Activated T-helper 2 cell treated with anti-CD3 and anti-CD28 coated beads, Interferon-gamma antibody, Interleukin-2, Interleukin-4, amounts not matched to agents 10 μg/mL and 5 μg/mL and 100 μg/mL, durations not matched to agents 14 hours and 24 hours and 36 hours (primary cell): ENCODE measurements at regions of chr22 and their contacts with region 1.

Region 1: GRCh38 chr22:29603358-29604075 is at the start of gene NF2:
- DNase-seq: peak; percentile 99
- H3K4me3 Mint-ChIP-seq: peak within 1 kb of the TSS; percentile 97
- H3K27ac Mint-ChIP-seq: peak within 1 kb of the TSS; percentile 97
- H3K4me1 Mint-ChIP-seq: peaks cover 22% of the 10 kb centered on the region
- H3K27me3 Mint-ChIP-seq: no peaks in the 10 kb centered on the region
- total RNA-seq, gene NF2: 57.1 and 57.7 TPM in 2 replicates

Region 2: DNA sequence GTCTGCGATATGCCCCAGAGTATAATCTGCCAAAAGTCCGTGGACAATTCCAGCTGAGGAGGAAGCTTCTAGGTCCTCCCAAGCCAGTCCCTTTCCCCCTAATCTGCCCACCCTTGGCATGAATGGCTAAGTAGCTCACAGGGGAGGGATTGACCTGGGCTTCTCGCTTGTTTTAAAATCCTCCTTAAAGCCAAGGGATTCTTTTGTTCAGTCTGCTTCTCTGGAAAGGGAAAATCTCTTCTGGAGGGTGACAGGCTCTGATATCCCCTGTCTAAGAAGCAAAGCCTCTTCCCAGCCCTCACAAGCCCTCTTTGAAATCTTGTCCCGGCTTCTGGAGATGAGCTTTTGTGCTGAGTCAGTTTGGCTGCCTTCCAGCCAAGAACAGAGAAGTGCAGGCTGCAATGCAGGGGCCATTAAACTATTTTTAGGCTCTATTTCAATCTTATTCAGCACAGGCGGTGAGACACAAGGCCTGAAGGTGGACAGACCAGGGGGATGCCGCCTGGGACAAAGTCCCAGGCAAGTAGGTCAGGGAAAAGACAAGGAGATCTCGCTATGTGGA is 99.6 kb before region 1 on chr22:
- intact Hi-C with region 1: no loop called
- DNase-seq: no peak
- H3K4me3 Mint-ChIP-seq: no peak overlapping the region
- H3K27ac Mint-ChIP-seq: no peak overlapping the region
- H3K4me1 Mint-ChIP-seq: no peaks in the 10 kb centered on the region
- H3K27me3 Mint-ChIP-seq: no peaks in the 10 kb centered on the region

Region 3: DNA sequence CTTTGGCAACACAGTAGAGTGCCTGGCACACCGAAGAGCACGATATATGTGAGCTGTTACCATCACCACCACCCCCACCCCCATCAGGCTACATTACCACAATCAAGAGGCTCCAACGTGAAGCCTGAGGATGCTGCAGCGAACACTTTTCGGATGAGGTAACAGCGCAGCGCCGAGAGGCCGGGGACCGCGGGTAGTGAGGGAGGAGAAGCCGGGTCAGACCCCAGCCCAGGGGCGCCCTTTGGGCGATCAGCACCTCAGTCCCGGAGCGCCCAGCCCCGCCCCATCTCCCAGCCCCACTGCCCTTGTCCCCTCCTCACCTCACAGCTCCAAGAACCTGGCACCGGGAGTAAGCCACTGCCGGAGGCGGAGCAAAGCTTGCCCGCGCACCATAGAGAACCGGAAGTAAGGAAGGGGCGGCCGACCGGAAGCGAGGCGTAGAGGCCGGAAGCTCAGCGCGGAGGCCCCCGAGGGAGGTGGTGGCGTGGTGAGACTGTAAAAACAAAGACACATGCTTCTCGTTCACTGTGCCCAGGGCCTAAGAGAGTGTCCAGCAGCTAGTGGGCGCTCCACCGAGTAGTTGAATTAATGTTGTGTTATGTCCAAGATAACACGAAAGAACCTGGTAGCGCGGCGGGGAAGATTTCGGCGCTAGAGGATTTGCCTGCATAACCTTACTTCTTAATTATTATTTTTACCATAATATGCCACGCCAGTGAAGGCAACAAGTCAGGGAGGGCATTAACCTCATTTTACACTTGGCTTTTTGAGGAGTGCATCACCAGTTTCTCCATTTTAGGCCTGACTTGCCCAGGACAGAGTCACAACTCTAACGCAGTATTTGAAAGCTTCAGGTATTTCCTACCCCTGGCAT is 49.9 kb before region 1 on chr22 and contains the start of gene THOC5:
- intact Hi-C with region 1: loop called (anchors 2 kb)
- DNase-seq: peak; percentile 88
- H3K4me3 Mint-ChIP-seq: peak within 1 kb of the TSS; percentile 92
- H3K27ac Mint-ChIP-seq: peak within 1 kb of the TSS; percentile 90
- H3K4me1 Mint-ChIP-seq: peaks cover 11% of the 10 kb centered on the region
- H3K27me3 Mint-ChIP-seq: no peaks in the 10 kb centered on the region
- total RNA-seq, gene THOC5: 50.5 and 52.7 TPM in 2 replicates

Region 4: DNA sequence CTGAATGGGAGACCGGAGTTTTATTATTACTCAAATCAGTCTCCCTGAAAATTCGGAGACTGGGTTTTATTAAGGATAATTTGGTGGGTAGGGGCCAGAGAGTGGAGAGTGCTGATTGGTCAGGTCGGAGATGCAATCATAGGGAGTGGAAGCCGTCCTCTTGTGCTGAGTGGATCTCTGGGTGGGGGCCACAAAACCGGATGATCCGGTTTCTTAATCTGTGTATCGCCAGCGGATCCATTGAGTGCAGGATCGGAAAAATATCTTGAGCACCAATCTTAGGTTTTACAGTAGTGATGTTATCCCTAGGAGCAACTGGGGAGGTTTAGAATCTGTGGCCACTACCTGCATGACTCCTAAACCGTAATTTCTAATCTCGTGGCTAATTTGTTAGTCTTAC is 21.7 kb before region 1 on chr22:
- intact Hi-C with region 1: loop called (anchors 1 kb)
- DNase-seq: no peak
- H3K4me3 Mint-ChIP-seq: peak overlapping the region; percentile 92
- H3K27ac Mint-ChIP-seq: peak overlapping the region; percentile 74
- H3K4me1 Mint-ChIP-seq: peaks cover 12% of the 10 kb centered on the region
- H3K27me3 Mint-ChIP-seq: no peaks in the 10 kb centered on the region

Region 5: DNA sequence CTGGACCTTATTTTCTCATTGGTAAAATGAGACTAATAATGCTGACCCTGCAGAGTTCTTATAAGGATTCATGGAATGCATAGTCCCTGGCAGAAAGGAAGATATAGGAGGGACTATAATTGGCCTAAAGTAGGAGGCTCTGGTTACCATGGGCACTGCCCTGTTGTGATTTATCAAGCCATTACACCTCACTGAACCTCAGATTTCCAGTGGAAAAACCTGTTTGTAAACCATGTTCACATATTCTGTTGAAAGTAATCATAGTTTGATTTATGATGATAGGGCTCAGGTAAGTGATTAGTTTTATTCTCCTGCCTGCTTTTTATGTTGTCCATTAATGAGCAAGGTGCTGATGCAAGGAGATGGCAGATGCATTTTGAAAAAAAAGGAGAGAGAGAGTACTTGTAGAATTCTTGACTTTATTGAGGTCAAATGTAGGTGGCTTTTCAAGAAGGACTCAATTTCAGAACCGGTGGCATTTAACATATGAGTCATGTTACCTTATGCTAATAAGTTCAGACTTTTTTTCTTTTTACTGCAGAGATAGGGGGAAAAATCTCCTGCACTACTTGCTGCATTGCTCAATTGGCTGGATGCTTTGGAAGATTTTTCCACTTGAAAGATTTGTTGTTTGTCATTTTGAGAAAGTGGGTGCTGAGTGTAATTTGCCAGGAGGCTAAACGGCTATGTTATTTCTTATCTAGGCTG is 14.6 kb after region 1 on chr22:
- intact Hi-C with region 1: loop called (anchors 1 kb)
- DNase-seq: no peak
- H3K4me3 Mint-ChIP-seq: no peak overlapping the region
- H3K27ac Mint-ChIP-seq: peak overlapping the region; percentile 61
- H3K4me1 Mint-ChIP-seq: peaks cover 29% of the 10 kb centered on the region
- H3K27me3 Mint-ChIP-seq: no peaks in the 10 kb centered on the region

Region 6: GRCh38 chr22:29766632-29767170 is 163.2 kb after region 1 on chr22 and contains the start of gene ZMAT5:
- intact Hi-C with region 1: loop called (anchors 1 kb)
- DNase-seq: peak; percentile 91
- H3K4me3 Mint-ChIP-seq: peak within 1 kb of the TSS; percentile 97
- H3K27ac Mint-ChIP-seq: peak within 1 kb of the TSS; percentile 91
- H3K4me1 Mint-ChIP-seq: peaks cover 21% of the 10 kb centered on the region
- H3K27me3 Mint-ChIP-seq: no peaks in the 10 kb centered on the region
- total RNA-seq, gene ZMAT5: 26.0 and 26.9 TPM in 2 replicates

Region 7: DNA sequence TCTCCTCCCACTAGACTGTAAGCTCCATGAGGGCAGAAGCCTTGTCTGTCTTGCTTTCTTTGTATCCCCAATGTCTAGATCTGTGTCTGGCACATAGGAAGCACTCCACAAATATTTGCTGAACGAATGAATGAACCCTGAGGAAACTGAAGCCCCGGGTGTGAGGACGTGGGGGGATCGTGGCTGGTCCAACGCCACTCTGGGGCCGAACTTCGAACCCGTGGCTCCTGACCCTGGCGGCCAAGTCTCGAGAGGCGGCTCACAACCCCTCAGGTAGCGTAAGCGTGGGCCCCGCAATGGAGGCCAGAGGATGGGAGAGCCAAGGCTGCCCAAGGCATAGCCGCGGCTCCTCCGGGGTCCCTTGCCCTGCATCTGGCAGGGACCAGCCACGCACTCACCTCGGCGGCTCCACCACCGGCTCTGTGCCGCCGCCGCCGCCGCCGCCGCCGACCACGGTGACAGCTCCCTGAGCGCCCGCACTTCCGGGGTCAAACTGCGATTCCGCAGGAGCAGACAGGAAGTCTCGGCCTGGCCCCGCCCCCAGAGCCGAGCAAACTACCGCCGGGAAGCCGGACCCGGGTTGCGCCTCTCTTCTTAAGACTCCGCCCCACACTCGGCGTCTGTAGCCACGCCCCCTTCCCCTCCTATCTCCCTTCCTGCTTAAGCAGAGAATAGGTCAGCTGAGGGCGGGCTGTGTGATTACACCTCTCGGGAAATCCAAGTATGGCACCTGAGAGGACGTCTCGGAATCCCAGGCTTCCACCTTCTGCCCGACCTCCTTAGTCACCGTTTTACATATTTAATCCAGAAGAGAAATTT is 234.5 kb after region 1 on chr22 and contains the start of gene ASCC2:
- intact Hi-C with region 1: loop called (anchors 5 kb)
- DNase-seq: peak; percentile 99
- H3K4me3 Mint-ChIP-seq: peak within 1 kb of the TSS; percentile 91
- H3K27ac Mint-ChIP-seq: peak within 1 kb of the TSS; percentile 84
- H3K4me1 Mint-ChIP-seq: peaks cover 26% of the 10 kb centered on the region
- H3K27me3 Mint-ChIP-seq: no peaks in the 10 kb centered on the region
- total RNA-seq, gene ASCC2: 69.8 and 74.9 TPM in 2 replicates

Region 8: DNA sequence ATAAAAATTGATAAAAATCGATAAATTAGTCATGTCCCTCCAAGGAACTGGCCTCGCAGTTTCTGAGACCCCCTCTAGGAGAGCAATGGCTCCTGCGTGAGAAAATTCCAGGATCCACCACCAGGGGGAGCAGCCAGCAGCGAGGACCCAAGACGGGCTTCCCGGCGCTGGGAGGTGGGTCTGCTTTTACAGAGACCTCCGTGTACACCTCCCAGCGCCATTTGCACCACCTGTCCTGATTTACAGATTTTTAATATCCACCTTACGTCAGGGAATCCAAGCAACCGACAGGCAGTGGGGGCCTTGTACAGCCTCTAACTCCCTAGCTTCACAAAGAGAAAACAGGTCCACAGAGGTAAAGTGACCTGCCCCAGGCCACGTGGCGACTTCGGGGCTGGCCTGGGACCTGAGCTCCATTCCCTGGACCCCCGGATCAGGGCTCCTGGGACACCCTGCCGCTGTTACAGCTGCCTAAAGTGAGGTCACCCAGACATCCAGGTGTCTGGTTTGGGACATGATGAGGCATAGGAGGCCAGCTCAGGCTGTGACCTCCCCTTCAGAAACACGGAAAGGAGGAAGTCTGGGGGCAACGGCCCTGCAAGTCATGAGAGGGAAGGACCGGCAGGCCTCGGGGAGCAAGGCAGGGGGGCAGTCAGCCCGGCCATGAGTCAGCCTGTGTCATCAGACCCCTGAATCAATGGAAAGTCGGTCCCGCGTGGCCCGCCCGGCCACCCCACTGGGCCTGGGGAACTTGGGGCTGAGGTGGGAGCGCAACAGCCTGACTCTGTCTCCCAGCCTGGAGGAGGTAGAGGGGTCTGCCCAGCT is 659.6 kb after region 1 on chr22:
- intact Hi-C with region 1: loop called (anchors 5 kb)
- DNase-seq: peak; percentile 69
- H3K4me3 Mint-ChIP-seq: peak overlapping the region; percentile 96
- H3K27ac Mint-ChIP-seq: peak overlapping the region; percentile 77
- H3K4me1 Mint-ChIP-seq: peaks cover 32% of the 10 kb centered on the region
- H3K27me3 Mint-ChIP-seq: no peaks in the 10 kb centered on the region